Ascending aorta (tissue), 2 donors: ENCODE measurements at regions of chr2 and their contacts with region 1.

Region 1: DNA sequence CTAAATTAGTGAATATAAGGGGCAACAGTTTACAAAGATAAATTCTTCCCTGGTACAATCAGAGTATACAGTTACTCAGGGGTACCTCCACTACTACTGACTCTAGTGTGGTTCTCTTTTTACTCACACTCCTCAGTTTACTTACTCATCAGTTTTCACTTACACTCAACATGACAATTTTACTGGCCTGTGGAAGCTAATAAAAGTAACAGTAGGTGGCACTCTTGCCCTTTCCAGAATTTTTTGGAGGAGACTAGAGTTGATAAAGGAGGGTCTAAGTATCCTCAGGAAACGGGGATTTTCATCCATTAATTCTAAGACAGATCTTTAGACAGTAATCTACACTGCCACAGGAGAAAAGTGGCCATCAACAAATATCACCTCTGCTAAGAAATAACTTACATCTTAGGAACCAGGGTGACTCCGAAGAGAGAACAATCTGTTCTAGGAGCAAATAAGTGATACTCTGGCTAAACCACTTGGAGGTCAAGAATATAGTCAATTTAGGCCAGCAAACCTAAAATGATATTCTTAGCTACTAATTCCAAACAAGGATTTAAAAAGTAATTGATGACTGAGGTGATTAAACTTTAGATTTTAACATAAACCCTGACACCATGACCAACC is 61.3 kb downstream of the ATL2 start:
- DNase-seq: no peak
- H3K4me3 ChIP-seq: no peak overlapping the region
- H3K27ac ChIP-seq: no peak overlapping the region
- H3K4me1 ChIP-seq: no peaks in the 10 kb centered on the region
- H3K27me3 ChIP-seq: no peaks in the 10 kb centered on the region
- CTCF ChIP-seq: peak; percentile 56 to 79 (median 58)

Region 2: DNA sequence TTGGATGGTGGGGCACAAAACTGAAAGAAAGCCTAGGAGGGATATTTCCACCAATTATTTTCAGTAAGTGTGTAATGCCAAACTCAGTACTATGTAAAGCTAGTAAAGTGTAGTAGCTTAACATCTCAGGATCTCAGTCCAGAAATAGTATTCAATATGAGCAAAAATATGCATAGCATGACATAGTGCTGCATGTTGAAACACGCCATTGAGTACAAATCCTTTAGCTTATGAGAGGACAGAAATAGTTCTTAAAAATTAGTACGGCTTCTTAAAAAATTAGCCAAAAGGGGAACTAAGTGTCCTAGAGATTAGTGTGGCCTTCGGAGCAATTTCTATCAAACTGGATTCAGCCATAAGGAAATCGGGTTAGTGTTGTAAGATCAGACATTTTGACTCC is 82.9 kb after region 1 on chr2:
- intact Hi-C with region 1: no loop called
- DNase-seq: no peak
- H3K4me3 ChIP-seq: no peak overlapping the region
- H3K27ac ChIP-seq: no peak overlapping the region
- H3K4me1 ChIP-seq: no peaks in the 10 kb centered on the region
- H3K27me3 ChIP-seq: no peaks in the 10 kb centered on the region
- CTCF ChIP-seq: no peak

Region 3: DNA sequence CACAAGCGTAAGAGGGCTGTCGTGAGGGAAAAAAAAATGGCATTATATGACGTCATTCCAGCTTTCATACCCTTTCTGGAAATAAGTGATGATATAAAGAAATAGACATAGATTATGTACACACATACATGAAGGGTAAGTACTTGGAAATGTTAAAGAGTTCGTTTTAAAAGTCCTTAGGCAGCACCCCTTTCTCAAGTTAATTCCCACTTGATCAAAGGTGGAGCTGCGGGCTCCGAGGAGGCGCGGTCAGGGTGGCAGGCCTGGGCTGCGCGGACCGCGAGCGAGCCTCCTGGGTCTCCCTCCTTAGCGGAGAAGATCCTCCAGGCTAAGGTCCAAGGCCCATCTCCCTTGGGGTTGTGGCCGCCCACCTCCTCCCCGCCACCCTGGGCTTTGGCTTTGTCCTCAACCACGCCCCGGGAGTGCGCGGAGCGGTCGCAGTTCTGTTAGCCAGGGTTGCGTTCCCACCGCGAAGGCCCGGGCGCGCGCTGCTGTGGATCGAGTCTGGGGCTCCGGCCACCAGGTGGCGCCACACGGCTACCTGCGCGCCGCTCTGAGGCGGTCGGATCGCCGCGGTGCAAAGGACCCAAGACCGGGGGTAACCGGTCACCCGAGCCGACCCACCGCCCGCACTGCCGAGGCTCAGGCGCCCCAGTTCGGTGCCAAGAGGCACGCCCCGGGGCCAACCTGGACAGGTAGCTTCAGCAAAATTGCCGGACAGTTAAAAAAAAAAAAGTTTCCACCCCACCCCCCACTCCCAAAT is 220.1 kb after region 1 on chr2:
- intact Hi-C with region 1: loop called (anchors 2 kb)
- DNase-seq: peak in 1 of 2 donors; percentile 86
- H3K4me3 ChIP-seq: peak overlapping the region; percentile 52 to 66
- H3K27ac ChIP-seq: no peak overlapping the region
- H3K4me1 ChIP-seq: peaks cover 0 to 3% of the 10 kb centered on the region in 2 donors
- H3K27me3 ChIP-seq: no peaks in the 10 kb centered on the region
- CTCF ChIP-seq: peak; percentile 87 to 93 (median 91)

Region 4: DNA sequence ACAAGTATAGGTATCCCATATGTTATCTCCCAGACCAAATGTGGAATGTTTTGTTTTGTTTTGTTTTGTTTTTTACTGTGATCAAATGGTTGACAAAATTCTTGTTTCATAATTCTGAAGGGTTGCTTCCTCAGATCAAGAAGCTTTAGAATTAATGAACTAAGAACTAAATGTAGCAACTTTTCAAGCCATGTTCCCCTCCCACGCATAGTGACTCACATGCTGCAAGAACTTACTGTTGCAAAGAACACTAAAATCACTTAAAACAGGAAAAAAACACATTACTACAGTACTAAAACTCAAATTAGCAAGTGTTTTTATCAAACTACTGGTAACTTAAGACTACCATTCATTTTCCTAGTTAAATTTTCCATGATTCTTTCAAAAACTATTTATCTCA is 256.3 kb after region 1 on chr2:
- intact Hi-C with region 1: loop called (anchors 10 kb)
- DNase-seq: no peak
- H3K4me3 ChIP-seq: no peak overlapping the region
- H3K27ac ChIP-seq: no peak overlapping the region
- H3K4me1 ChIP-seq: peaks cover 0 to 4% of the 10 kb centered on the region in 2 donors
- H3K27me3 ChIP-seq: no peaks in the 10 kb centered on the region
- CTCF ChIP-seq: no peak

Region 5: DNA sequence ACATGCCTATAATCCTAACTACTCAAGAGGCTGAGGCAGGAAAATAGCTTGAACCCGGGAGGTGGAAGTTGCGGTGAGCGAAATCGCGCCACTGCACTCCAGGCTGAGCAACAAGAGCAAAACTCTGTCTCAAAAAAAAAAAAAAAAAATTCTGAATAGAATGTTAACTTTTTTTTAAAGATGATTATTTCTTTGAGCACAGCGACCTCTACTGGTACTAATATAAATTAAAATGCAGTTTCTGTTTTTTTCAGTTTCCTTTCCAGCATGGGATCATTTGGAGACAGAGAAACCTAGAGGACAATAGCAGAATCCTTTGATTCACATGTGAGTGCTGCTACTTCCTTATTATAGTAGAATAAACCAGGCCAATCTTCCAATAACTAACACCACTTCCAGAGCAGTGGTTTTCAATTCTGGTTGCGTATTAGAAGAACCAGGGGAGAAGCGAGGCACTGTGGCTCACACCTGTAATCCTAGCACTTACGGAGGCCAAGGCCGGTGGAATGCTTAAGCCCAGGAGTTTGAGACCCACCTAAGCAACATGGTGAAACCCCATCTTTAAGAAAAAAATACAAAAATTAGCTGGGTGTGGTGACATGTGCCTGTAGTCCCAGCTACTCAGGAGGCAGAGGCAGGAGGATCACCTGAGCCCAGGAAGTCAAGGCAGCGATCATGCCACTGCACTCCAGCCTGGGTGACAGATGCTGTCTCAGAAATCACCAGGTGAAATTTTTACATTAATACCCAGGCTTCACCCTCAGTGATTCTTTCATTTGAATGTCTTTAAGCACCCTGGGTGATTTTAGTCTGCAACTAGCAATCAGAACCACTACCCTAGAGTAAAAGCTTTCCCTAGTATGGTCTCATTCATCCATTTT is 425.3 kb after region 1 on chr2:
- intact Hi-C with region 1: loop called (anchors 5 kb)
- DNase-seq: no peak
- H3K4me3 ChIP-seq: peak overlapping the region in 1 of 2 donors; percentile 13
- H3K27ac ChIP-seq: peak overlapping the region; percentile 25 to 44
- H3K4me1 ChIP-seq: peaks cover 0 to 4% of the 10 kb centered on the region in 2 donors
- H3K27me3 ChIP-seq: no peaks in the 10 kb centered on the region
- CTCF ChIP-seq: peak; percentile 52 to 60 (median 57)

Region 6: DNA sequence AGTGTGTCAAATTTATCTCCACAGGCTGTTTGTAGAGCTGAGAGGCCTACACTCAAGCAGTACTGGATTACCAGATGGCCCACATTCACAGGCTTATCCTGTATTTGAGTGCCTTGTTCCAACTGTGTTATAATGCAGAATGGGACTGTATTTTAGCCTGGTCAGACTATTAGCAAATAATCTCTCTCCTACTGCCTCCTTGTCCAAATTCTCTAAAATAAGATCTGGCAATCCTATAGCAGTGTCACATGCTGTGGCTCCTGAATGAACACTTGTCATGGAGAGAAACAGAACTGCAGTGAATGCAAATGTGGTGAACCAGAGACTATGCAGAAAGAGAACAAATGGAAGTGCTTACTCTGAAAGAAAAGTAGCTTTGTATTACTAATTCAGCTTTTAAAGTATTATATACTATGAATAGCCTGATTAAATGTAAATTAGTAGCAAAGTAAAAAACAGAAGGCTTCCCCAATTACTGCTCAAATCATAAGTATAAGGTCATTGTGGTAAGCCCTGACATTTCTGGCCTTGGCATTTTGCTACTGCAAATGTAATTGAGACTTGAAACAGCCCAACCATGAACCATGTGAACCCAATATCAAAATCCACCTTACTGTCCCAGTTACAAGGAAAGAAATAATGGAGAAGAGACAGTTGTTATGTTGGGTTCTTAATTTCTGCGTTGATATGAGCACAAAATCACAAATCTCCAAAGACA is 1041.3 kb after region 1 on chr2:
- intact Hi-C with region 1: no loop called
- DNase-seq: no peak
- H3K4me3 ChIP-seq: no peak overlapping the region
- H3K27ac ChIP-seq: no peak overlapping the region
- H3K4me1 ChIP-seq: no peaks in the 10 kb centered on the region
- H3K27me3 ChIP-seq: no peaks in the 10 kb centered on the region
- CTCF ChIP-seq: no peak